ENCODE measurements at regions of chr7 and their contacts with region 1.

Region 1: DNA sequence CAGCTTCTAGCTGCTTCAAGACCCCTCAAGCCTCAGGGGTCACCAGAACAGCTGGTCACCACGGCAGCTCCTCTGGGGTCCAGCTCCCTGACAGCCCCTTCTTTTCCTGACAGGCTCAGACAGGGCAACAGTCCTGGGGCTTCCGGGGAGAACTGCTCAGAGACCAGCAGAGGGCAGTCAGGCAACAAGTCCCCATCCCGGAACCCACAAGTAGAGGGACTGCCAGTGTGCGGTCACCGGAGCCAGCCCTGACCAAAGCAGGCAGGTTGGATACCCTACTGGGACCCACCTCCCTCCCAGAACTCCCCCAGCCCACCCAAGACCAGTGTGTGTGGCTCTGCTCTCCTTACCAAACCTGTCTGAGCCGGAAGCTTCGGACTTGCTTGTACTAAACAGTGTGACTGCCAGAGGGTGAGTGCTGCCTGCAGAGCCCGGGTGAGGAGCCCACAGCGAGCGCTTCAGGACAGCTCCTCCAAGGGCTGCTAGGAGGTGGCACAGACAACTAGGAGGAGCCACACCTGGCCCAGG is 40.3 kb downstream of the YKT6 start:
- DNase-seq: peak; percentile 40 to 70 (median 66)
- ATAC-seq: peak; percentile 81
- H3K4me3 ChIP-seq: peak overlapping the region; percentile 27
- H3K4me3 Mint-ChIP-seq: peak overlapping the region in 8 of 10 donors; percentile 37 to 69 (median 50)
- H3K27ac ChIP-seq: no peak overlapping the region
- H3K27ac Mint-ChIP-seq: peak overlapping the region in 2 of 9 donors; percentile 39 to 62
- H3K4me1 ChIP-seq: no peaks in the 10 kb centered on the region
- H3K4me1 Mint-ChIP-seq: peaks cover 0 to 4% (median 0%) of the 10 kb centered on the region in 7 donors
- H3K27me3 ChIP-seq: no peaks in the 10 kb centered on the region
- H3K27me3 Mint-ChIP-seq: peaks cover 0 to 3% (median 0%) of the 10 kb centered on the region in 5 donors

Region 2: GRCh38 chr7:44257618-44258422 is 16.8 kb after region 1 on chr7:
- CTCF ChIA-PET with region 1: interaction called, 7 read pairs
- POLR2A ChIA-PET with region 1: no interaction called
- intact Hi-C with region 1: loop called in 1 of 2 experiments (anchors 2 kb)
- DNase-seq: peak; percentile 44 to 75 (median 67)
- ATAC-seq: peak; percentile 83
- H3K4me3 ChIP-seq: peak overlapping the region; percentile 10
- H3K4me3 Mint-ChIP-seq: peak overlapping the region; percentile 22 to 87 (median 75)
- H3K27ac ChIP-seq: peak overlapping the region; percentile 79
- H3K27ac Mint-ChIP-seq: peak overlapping the region; percentile 82 to 96 (median 94)
- H3K4me1 ChIP-seq: peaks cover 17 to 20% of the 10 kb centered on the region in 2 donors
- H3K4me1 Mint-ChIP-seq: peaks cover 13 to 29% (median 26%) of the 10 kb centered on the region in 7 donors
- H3K27me3 ChIP-seq: no peaks in the 10 kb centered on the region
- H3K27me3 Mint-ChIP-seq: no peaks in the 10 kb centered on the region

Region 3: GRCh38 chr7:44375236-44375699 is 134.2 kb after region 1 on chr7:
- CTCF ChIA-PET with region 1: no interaction called
- POLR2A ChIA-PET with region 1: no interaction called
- intact Hi-C with region 1: loop called in 1 of 2 experiments (anchors 5 kb)
- DNase-seq: no peak
- ATAC-seq: no peak
- H3K4me3 ChIP-seq: no peak overlapping the region
- H3K4me3 Mint-ChIP-seq: no peak overlapping the region
- H3K27ac ChIP-seq: no peak overlapping the region
- H3K27ac Mint-ChIP-seq: no peak overlapping the region
- H3K4me1 ChIP-seq: no peaks in the 10 kb centered on the region
- H3K4me1 Mint-ChIP-seq: peaks cover 0 to 9% (median 0%) of the 10 kb centered on the region in 7 donors
- H3K27me3 ChIP-seq: no peaks in the 10 kb centered on the region
- H3K27me3 Mint-ChIP-seq: peaks cover under 1 to 13% (median 10%) of the 10 kb centered on the region in 5 donors

Region 4: GRCh38 chr7:44460325-44460724 is 219.3 kb after region 1 on chr7:
- CTCF ChIA-PET with region 1: no interaction called
- POLR2A ChIA-PET with region 1: no interaction called
- intact Hi-C with region 1: loop called in 1 of 2 experiments (anchors 5 kb)
- DNase-seq: peak in 8 of 9 donors; percentile 37 to 89 (median 85)
- ATAC-seq: peak; percentile 98
- H3K4me3 ChIP-seq: peak overlapping the region; percentile 28
- H3K4me3 Mint-ChIP-seq: peak overlapping the region; percentile 57 to 91 (median 72)
- H3K27ac ChIP-seq: peak overlapping the region; percentile 62
- H3K27ac Mint-ChIP-seq: peak overlapping the region; percentile 16 to 96 (median 79)
- H3K4me1 ChIP-seq: peaks cover 36 to 55% of the 10 kb centered on the region in 2 donors
- H3K4me1 Mint-ChIP-seq: peaks cover 48 to 96% (median 85%) of the 10 kb centered on the region in 7 donors
- H3K27me3 ChIP-seq: no peaks in the 10 kb centered on the region
- H3K27me3 Mint-ChIP-seq: no peaks in the 10 kb centered on the region

Region 5: GRCh38 chr7:44565097-44565794 is 324.2 kb after region 1 on chr7:
- CTCF ChIA-PET with region 1: interaction called, 27 read pairs
- POLR2A ChIA-PET with region 1: no interaction called
- intact Hi-C with region 1: loop called in 1 of 2 experiments (anchors 1 kb)
- DNase-seq: peak; percentile 25 to 72 (median 57)
- ATAC-seq: peak; percentile 92
- H3K4me3 ChIP-seq: no peak overlapping the region
- H3K4me3 Mint-ChIP-seq: no peak overlapping the region
- H3K27ac ChIP-seq: peak overlapping the region; percentile 41
- H3K27ac Mint-ChIP-seq: peak overlapping the region; percentile 3 to 83 (median 42)
- H3K4me1 ChIP-seq: no peaks in the 10 kb centered on the region
- H3K4me1 Mint-ChIP-seq: peaks cover 5 to 20% (median 11%) of the 10 kb centered on the region in 7 donors
- H3K27me3 ChIP-seq: no peaks in the 10 kb centered on the region
- H3K27me3 Mint-ChIP-seq: no peaks in the 10 kb centered on the region

Region 6: DNA sequence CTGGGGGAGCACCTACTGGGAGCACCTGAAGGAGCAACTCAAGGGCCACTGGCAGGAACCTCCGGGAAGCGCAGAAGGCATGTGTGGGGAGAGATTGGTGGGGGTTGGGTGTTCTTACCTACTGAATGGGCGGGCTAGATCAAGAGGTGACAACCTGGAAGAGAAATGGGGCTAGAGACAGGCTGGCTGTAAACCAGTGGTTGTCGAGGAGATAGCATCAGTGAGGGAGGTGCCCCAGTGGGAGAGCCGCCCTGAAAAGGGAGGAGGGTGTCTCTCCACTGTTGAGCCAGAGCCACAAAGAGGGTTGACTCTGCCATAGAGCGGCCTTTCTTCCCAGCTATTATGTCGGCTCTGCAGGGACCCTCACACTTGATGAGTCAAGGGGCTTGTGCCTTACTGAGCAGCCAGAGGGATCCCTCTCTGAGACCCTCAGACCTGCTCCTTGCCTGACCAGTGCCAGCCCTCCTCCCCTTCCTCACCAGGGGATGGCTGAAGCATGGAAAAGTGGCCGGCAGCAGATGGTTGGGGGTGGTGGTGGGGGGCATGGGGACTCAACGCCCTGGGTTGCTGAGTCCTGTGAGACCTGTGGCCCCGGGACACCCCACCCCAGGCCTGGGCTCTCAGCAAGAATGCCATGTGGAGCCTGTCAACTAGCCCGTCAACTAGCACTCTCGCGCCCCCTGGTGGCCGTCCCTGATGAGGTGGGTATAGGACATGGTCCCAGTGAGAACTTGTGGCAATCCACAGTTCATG is 680.7 kb after region 1 on chr7:
- CTCF ChIA-PET with region 1: no interaction called
- POLR2A ChIA-PET with region 1: no interaction called
- intact Hi-C with region 1: loop called in 1 of 2 experiments (anchors 10 kb)
- DNase-seq: peak; percentile 76 to 98 (median 86)
- ATAC-seq: peak; percentile 99
- H3K4me3 ChIP-seq: no peak overlapping the region
- H3K4me3 Mint-ChIP-seq: no peak overlapping the region
- H3K27ac ChIP-seq: no peak overlapping the region
- H3K27ac Mint-ChIP-seq: peak overlapping the region in 5 of 9 donors; percentile 6 to 78 (median 34)
- H3K4me1 ChIP-seq: peaks cover 0 to 9% of the 10 kb centered on the region in 2 donors
- H3K4me1 Mint-ChIP-seq: peaks cover 0 to 21% (median 0%) of the 10 kb centered on the region in 7 donors
- H3K27me3 ChIP-seq: no peaks in the 10 kb centered on the region
- H3K27me3 Mint-ChIP-seq: peaks cover 0 to 6% (median 0%) of the 10 kb centered on the region in 5 donors